Endothelial cell of umbilical vein (primary cell): ENCODE measurements at regions of chrX and their contacts with region 1.

Region 1: GRCh38 chrX:38052096-38052495 is 45.7 kb downstream of the SYTL5 start:
- DNase-seq: peak; percentile 35
- H3K4me3 ChIP-seq: no peak overlapping the region
- H3K27ac ChIP-seq: no peak overlapping the region
- H3K4me1 ChIP-seq: peaks cover 7% of the 10 kb centered on the region
- H3K27me3 ChIP-seq: no peaks in the 10 kb centered on the region
- CTCF ChIP-seq: no peak
- POLR2A ChIP-seq: no peak

Region 2: DNA sequence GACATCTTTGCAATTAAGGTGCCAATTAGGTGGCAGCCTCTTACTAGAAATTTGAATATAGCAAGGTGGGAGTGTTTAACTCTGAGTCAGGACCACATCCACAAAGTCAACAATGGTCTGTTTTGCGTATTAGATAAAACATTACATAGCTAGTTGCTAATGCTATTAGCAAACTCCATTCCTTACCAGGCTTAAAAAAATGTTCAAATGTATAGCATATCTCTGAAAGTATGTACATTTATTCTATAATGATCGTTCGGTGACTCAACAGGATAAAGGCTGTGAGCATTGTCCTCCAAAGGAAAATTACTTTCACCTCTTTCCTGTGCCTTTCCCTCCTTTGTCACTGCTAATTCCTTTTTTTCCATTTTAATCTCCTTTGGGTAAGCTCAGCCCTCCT is 28.7 kb after region 1 on chrX:
- CTCF ChIA-PET with region 1: no interaction called
- POLR2A ChIA-PET with region 1: no interaction called
- dilution Hi-C with region 1: no loop called
- intact Hi-C with region 1: loop called (anchors 1 kb)
- DNase-seq: peak; percentile 38
- H3K4me3 ChIP-seq: no peak overlapping the region
- H3K27ac ChIP-seq: peak overlapping the region; percentile 55
- H3K4me1 ChIP-seq: peaks cover 21% of the 10 kb centered on the region
- H3K27me3 ChIP-seq: no peaks in the 10 kb centered on the region
- CTCF ChIP-seq: no peak
- POLR2A ChIP-seq: no peak